Mammary epithelial cell (primary cell): ENCODE measurements at regions of chr7 and their contacts with region 1.

Region 1: DNA sequence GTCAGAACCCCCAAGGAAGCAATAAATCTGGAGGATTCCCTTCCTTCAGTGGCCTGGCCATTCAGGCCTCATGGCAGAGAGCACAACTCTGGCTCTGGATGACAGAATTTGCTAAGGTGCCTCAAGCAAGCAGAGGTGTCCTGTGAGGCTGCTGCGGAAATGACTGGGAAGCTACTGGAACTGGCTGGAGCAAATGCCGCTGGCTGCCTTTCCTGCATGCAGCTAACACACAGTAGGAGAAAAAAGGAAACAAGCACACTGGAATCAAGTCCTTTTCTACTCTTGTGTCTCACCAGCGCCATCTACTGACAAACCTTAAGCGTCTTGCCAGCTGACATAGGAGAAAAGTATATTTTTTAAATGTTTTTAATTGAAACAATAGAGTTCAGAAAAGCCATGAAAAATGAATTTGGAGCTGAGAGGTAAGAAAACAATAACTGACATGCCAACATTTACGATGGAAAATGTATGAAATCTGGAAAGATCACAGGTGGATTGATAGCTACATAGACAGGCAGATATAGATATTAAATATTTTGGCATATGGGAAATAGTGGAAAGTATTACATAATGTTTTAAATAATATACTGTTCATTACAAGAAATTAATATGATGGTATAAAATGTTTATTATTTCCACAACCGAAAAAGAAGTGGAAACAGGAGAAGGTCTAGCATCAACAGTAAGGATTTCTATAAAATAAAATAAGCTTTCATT is 951.6 kb downstream of the ANKRD7 start:
- DNase-seq: peak; percentile 42
- H3K4me3 ChIP-seq: no peak overlapping the region
- H3K27ac ChIP-seq: no peak overlapping the region
- H3K4me1 ChIP-seq: no peaks in the 10 kb centered on the region
- H3K27me3 ChIP-seq: no peaks in the 10 kb centered on the region
- CTCF ChIP-seq: peak; percentile 81 to 87

Region 2: GRCh38 chr7:118250860-118251494 is 925.1 kb before region 1 on chr7:
- CTCF ChIA-PET with region 1: no interaction called
- dilution Hi-C with region 1: no loop called
- in situ Hi-C with region 1: no loop called
- intact Hi-C with region 1: loop called (anchors 10 kb)
- DNase-seq: no peak
- H3K4me3 ChIP-seq: no peak overlapping the region
- H3K27ac ChIP-seq: no peak overlapping the region
- H3K4me1 ChIP-seq: no peaks in the 10 kb centered on the region
- H3K27me3 ChIP-seq: peaks cover 2% of the 10 kb centered on the region
- CTCF ChIP-seq: peak; percentile 29 to 48

Region 3: GRCh38 chr7:118352854-118353453 is 823.1 kb before region 1 on chr7:
- CTCF ChIA-PET with region 1: no interaction called
- dilution Hi-C with region 1: no loop called
- in situ Hi-C with region 1: loop called in 1 of 2 experiments (anchors 25 kb)
- intact Hi-C with region 1: loop called (anchors 5 kb)
- DNase-seq: peak; percentile 10
- H3K4me3 ChIP-seq: no peak overlapping the region
- H3K27ac ChIP-seq: no peak overlapping the region
- H3K4me1 ChIP-seq: no peaks in the 10 kb centered on the region
- H3K27me3 ChIP-seq: no peaks in the 10 kb centered on the region
- CTCF ChIP-seq: peak; percentile 31 to 54

Region 4: GRCh38 chr7:118870187-118870586 is 305.9 kb before region 1 on chr7:
- CTCF ChIA-PET with region 1: no interaction called
- dilution Hi-C with region 1: no loop called
- in situ Hi-C with region 1: no loop called
- intact Hi-C with region 1: loop called (anchors 1 kb)
- DNase-seq: peak; percentile 32
- H3K4me3 ChIP-seq: no peak overlapping the region
- H3K27ac ChIP-seq: no peak overlapping the region
- H3K4me1 ChIP-seq: peaks cover 10% of the 10 kb centered on the region
- H3K27me3 ChIP-seq: no peaks in the 10 kb centered on the region
- CTCF ChIP-seq: peak; percentile 62 to 71

Region 5: DNA sequence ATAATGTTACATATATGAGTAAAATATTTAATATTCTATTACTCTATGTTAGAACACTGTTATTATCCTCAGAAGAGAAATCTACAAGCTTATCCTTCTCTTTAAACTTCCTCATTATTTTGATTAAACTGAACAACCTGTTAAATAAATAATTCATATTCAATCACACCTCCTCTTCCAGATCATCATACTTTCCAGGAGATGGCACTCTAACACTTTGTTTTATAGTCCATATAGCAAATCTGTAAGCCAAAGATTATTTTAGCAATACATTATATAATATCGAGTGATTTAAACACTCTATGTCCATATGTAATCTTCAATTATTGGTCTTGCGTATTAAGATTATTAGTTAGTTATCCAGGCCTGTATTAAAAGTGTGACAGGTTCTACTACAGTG is 257.5 kb before region 1 on chr7:
- CTCF ChIA-PET with region 1: no interaction called
- dilution Hi-C with region 1: no loop called
- in situ Hi-C with region 1: loop called in 1 of 2 experiments (anchors 25 kb)
- intact Hi-C with region 1: loop called (anchors 1 kb)
- DNase-seq: peak; percentile 4
- H3K4me3 ChIP-seq: no peak overlapping the region
- H3K27ac ChIP-seq: no peak overlapping the region
- H3K4me1 ChIP-seq: no peaks in the 10 kb centered on the region
- H3K27me3 ChIP-seq: peaks cover 5% of the 10 kb centered on the region
- CTCF ChIP-seq: peak; percentile 48 to 52

Region 6: GRCh38 chr7:119007236-119007635 is 168.8 kb before region 1 on chr7:
- CTCF ChIA-PET with region 1: no interaction called
- dilution Hi-C with region 1: no loop called
- in situ Hi-C with region 1: no loop called
- intact Hi-C with region 1: no loop called
- DNase-seq: no peak
- H3K4me3 ChIP-seq: no peak overlapping the region
- H3K27ac ChIP-seq: no peak overlapping the region
- H3K4me1 ChIP-seq: no peaks in the 10 kb centered on the region
- H3K27me3 ChIP-seq: no peaks in the 10 kb centered on the region
- CTCF ChIP-seq: no peak